ENCODE measurements at regions of chr5 and their contacts with region 1.

Region 1: GRCh38 chr5:6765612-6766525 is 52.6 kb downstream of the TENT4A start:
- DNase-seq: peak; percentile 65 to 88
- H3K4me3 ChIP-seq: peak overlapping the region; percentile 14
- H3K27ac ChIP-seq: peak overlapping the region in 1 of 2 donors; percentile 76
- H3K4me1 ChIP-seq: peaks cover 0 to 24% (median 16%) of the 10 kb centered on the region in 4 donors
- H3K27me3 ChIP-seq: no peaks in the 10 kb centered on the region
- CTCF ChIP-seq: peak; percentile 79 to 92

Region 2: GRCh38 chr5:6220346-6221088 is 545.4 kb before region 1 on chr5:
- intact Hi-C with region 1: no loop called
- DNase-seq: no peak
- H3K4me3 ChIP-seq: no peak overlapping the region
- H3K27ac ChIP-seq: no peak overlapping the region
- H3K4me1 ChIP-seq: no peaks in the 10 kb centered on the region
- H3K27me3 ChIP-seq: no peaks in the 10 kb centered on the region
- CTCF ChIP-seq: no peak

Region 3: GRCh38 chr5:6820851-6821479 is 55.1 kb after region 1 on chr5:
- intact Hi-C with region 1: no loop called
- DNase-seq: no peak
- H3K4me3 ChIP-seq: no peak overlapping the region
- H3K27ac ChIP-seq: no peak overlapping the region
- H3K4me1 ChIP-seq: no peaks in the 10 kb centered on the region
- H3K27me3 ChIP-seq: peaks cover 0 to 12% of the 10 kb centered on the region in 2 donors
- CTCF ChIP-seq: peak in 1 of 2 experiments; percentile 25

Region 4: GRCh38 chr5:7391814-7392692 is 626.2 kb after region 1 on chr5:
- intact Hi-C with region 1: loop called (anchors 10 kb)
- DNase-seq: no peak
- H3K4me3 ChIP-seq: no peak overlapping the region
- H3K27ac ChIP-seq: no peak overlapping the region
- H3K4me1 ChIP-seq: peaks cover 0 to 17% (median 9%) of the 10 kb centered on the region in 4 donors
- H3K27me3 ChIP-seq: peaks cover 0 to 15% of the 10 kb centered on the region in 2 donors
- CTCF ChIP-seq: peak; percentile 39 to 44

Region 5: GRCh38 chr5:7745882-7746610 is 980.2 kb after region 1 on chr5:
- intact Hi-C with region 1: loop called (anchors 5 kb)
- DNase-seq: peak; percentile 76 to 81
- H3K4me3 ChIP-seq: no peak overlapping the region
- H3K27ac ChIP-seq: no peak overlapping the region
- H3K4me1 ChIP-seq: peaks cover 0 to 3% (median 0%) of the 10 kb centered on the region in 4 donors
- H3K27me3 ChIP-seq: no peaks in the 10 kb centered on the region
- CTCF ChIP-seq: peak; percentile 72 to 84

Measured in tibial artery (tissue), 4 donors.